Activated naive CD4-positive, alpha-beta T cell treated with anti-CD3 and anti-CD28 coated beads, Interleukin-2, amount 10 ng/mL, durations not matched to agents 7 days and 5 days (primary cell): ENCODE measurements at regions of chr17 and their contacts with region 1.

Region 1: GRCh38 chr17:40323391-40324381 is 14.7 kb downstream of the RARA start:
- DNase-seq: peak; percentile 70
- H3K4me3 Mint-ChIP-seq: peak overlapping the region; percentile 94
- H3K27ac Mint-ChIP-seq: peak overlapping the region; percentile 91
- H3K4me1 Mint-ChIP-seq: peaks cover 84% of the 10 kb centered on the region
- H3K27me3 Mint-ChIP-seq: no peaks in the 10 kb centered on the region

Region 2: DNA sequence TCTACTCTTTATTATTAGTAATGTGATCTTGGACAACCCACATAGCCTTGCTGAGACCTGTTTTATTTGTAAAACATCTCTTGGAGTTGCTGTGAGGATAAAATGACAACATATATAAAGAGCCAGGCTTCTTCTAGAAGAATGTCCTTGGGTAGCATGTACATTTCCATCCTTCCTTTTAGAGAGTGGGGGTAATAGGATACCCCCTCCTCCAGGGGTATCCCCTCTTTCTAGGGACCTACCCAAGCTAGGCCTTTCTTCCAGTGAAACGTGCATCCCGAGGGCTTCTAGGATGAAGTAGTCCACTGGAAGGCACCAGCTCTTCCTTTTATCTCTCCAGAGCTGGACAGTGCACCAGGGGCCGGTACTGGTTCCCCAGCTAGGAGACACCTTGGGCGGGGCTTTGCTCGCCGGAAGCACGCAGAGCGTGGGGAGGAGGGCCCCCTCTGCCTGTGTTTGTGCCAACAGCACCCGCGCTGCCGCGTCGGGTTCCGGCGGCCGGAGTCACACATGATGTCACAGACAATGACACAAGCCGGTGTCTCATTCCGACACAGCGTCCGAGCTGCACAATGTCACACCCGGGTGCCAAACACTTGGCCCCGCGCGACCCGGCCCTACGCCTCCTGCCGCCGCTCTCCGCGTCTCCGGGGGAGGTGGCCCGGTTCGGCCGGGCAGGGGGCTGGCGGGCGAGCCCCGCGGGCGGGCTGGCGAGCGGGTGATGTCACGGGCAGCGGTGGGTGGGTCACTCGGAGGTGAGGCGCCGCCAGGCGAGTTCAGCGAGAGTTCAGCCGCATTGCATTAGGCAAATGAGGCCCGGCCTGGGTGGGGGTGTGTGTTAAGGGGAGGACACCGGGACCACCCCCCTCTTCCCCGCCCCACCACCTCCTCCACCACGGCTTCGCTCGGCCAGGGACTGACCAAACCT is 17.5 kb after region 1 on chr17:
- CTCF ChIA-PET with region 1: interaction called, 20 read pairs
- DNase-seq: peak; percentile 91
- H3K4me3 Mint-ChIP-seq: peak overlapping the region; percentile 66
- H3K27ac Mint-ChIP-seq: peak overlapping the region; percentile 88
- H3K4me1 Mint-ChIP-seq: peaks cover 80% of the 10 kb centered on the region
- H3K27me3 Mint-ChIP-seq: no peaks in the 10 kb centered on the region